Naive thymus-derived CD8-positive, alpha-beta T cell (primary cell): ENCODE measurements at regions of chr18 and their contacts with region 1.

Region 1: GRCh38 chr18:9913526-9914333 is at the start of gene VAPA:
- DNase-seq: peak; percentile 88 to 97 (median 92)
- ATAC-seq: peak; percentile 81 to 82
- H3K4me3 Mint-ChIP-seq: peak within 1 kb of the TSS; percentile 85 to 95 (median 92)
- H3K27ac Mint-ChIP-seq: peak within 1 kb of the TSS; percentile 86 to 98 (median 96)
- H3K4me1 Mint-ChIP-seq: peaks cover 13 to 29% (median 27%) of the 10 kb centered on the region in 4 donors
- H3K27me3 Mint-ChIP-seq: peaks cover 0 to 2% (median 0%) of the 10 kb centered on the region in 5 donors
- polyA plus RNA-seq, gene VAPA: 187 to 214 (median 199) TPM

Region 2: DNA sequence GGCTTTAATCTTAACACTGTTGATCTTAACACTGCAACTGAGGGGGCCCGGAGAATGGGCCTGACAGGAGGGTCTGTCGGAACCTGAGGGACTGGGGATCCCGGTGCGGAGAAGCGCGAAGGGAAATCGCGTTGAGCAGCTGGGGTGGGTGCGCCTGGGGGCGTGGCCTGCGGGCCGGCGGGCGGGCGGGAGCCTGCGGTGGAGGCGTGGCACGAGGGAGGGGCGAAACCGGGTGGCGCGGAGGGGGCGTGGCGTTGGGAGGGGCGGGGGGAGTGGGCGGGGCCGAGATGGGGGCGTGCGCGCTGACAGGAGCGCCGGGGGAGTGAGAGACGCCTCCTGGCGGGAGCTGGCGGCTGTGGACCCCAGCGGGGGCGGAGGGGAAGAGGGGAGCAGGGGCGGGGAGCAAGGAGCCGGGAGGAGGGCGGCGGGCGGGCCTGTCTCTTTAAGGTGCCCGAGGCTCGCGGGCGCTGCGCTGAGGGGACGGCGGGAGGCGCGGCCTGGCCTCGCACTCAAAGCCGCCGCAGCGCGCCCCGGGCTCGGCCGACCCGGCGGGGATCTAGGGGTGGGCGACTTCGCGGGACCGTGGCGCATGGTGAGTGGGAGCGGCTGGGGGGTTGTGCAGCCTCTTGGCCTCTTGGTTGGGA is 579.3 kb before region 1 on chr18 and contains the start of gene TWSG1:
- POLR2A ChIA-PET with region 1: interaction called, 10 read pairs
- DNase-seq: peak; percentile 88 to 97 (median 93)
- ATAC-seq: peak; percentile 87 to 90
- H3K4me3 Mint-ChIP-seq: peak within 1 kb of the TSS; percentile 83 to 96 (median 90)
- H3K27ac Mint-ChIP-seq: peak within 1 kb of the TSS; percentile 69 to 98 (median 94)
- H3K4me1 Mint-ChIP-seq: peaks cover 1 to 31% (median 22%) of the 10 kb centered on the region in 4 donors
- H3K27me3 Mint-ChIP-seq: peaks cover 0 to 3% (median 0%) of the 10 kb centered on the region in 5 donors
- polyA plus RNA-seq, gene TWSG1: 4.0 to 6.1 (median 4.9) TPM

Region 3: DNA sequence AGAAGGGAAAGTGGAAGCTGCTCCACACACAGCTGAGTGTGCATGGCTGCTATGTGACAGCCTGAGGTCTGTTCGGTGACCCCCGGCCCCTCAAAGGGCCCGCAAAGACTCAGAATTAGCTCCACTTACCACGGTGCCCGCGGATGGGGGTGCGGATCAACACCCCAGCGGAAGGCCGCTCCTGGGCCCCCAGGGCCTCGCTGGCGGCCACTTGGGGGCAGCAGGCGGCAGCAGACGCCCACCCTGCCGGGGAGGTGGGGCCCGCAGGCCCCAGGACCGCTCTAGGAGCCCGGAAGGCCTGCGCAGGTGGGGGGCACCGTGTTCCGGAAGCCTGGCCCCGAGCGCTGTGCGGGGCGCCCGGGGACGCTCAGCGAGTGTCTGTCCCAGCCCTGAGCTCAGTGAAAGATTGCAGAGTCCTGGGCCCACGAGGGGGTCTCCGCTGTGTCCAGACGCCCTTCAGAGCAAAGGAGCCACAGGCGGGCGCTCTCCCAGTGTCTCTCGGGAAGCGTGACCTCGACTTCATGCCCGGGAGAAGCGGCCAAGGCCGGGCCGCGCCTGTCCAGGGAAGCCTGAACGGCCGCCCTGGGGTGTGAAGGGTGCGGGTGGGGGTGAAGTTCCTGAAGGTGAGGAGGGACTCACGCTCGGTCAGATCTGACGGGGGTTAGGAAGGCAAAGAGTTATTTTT is 118.7 kb after region 1 on chr18:
- POLR2A ChIA-PET with region 1: interaction called, 14 read pairs
- DNase-seq: peak; percentile 48 to 79 (median 62)
- ATAC-seq: peak; percentile 96 to 98
- H3K4me3 Mint-ChIP-seq: peak overlapping the region; percentile 81 to 93 (median 86)
- H3K27ac Mint-ChIP-seq: peak overlapping the region; percentile 71 to 95 (median 92)
- H3K4me1 Mint-ChIP-seq: peaks cover 11 to 14% (median 12%) of the 10 kb centered on the region in 4 donors
- H3K27me3 Mint-ChIP-seq: no peaks in the 10 kb centered on the region